Right lobe of liver (tissue), 6 donors: ENCODE measurements at regions of chr9 and their contacts with region 1.

Region 1: GRCh38 chr9:19925817-19926503 is 137.1 kb upstream of the SLC24A2 start:
- DNase-seq: peak; percentile 59 to 68 (median 66)
- ATAC-seq: peak; percentile 98 to 99 (median 98)
- H3K4me3 ChIP-seq: peak overlapping the region in 1 of 3 donors; percentile 32
- H3K27ac ChIP-seq: no peak overlapping the region
- H3K4me1 ChIP-seq: peaks cover 0 to 3% (median 0%) of the 10 kb centered on the region in 4 donors
- H3K27me3 ChIP-seq: no peaks in the 10 kb centered on the region
- CTCF ChIP-seq: peak; percentile 95 to 97 (median 96)
- POLR2A ChIP-seq: no peak

Region 2: GRCh38 chr9:20152151-20152725 is 226.3 kb after region 1 on chr9:
- intact Hi-C with region 1: no loop called
- DNase-seq: no peak
- ATAC-seq: no peak
- H3K4me3 ChIP-seq: no peak overlapping the region
- H3K27ac ChIP-seq: no peak overlapping the region
- H3K4me1 ChIP-seq: no peaks in the 10 kb centered on the region
- H3K27me3 ChIP-seq: no peaks in the 10 kb centered on the region
- CTCF ChIP-seq: no peak
- POLR2A ChIP-seq: no peak

Region 3: GRCh38 chr9:21102305-21102704 is 1176.3 kb after region 1 on chr9:
- intact Hi-C with region 1: loop called in 1 of 2 experiments (anchors 10 kb)
- DNase-seq: no peak
- ATAC-seq: no peak
- H3K4me3 ChIP-seq: no peak overlapping the region
- H3K27ac ChIP-seq: no peak overlapping the region
- H3K4me1 ChIP-seq: no peaks in the 10 kb centered on the region
- H3K27me3 ChIP-seq: no peaks in the 10 kb centered on the region
- CTCF ChIP-seq: no peak
- POLR2A ChIP-seq: no peak